ENCODE measurements at regions of chr22 and their contacts with region 1.

Region 1: GRCh38 chr22:19730655-19731360 is 7.5 kb downstream of the GP1BB start:
- DNase-seq: peak; percentile 72 to 84 (median 77)
- H3K4me3 ChIP-seq: no peak overlapping the region
- H3K4me3 Mint-ChIP-seq: peak overlapping the region; percentile 62 to 91 (median 84)
- H3K27ac ChIP-seq: no peak overlapping the region
- H3K27ac Mint-ChIP-seq: peak overlapping the region in 2 of 7 donors; percentile 68 to 80
- H3K4me1 ChIP-seq: peaks cover 11% of the 10 kb centered on the region
- H3K4me1 Mint-ChIP-seq: peaks cover 0 to 5% (median 3%) of the 10 kb centered on the region in 4 donors
- H3K27me3 ChIP-seq: no peaks in the 10 kb centered on the region
- H3K27me3 Mint-ChIP-seq: peaks cover 2 to 6% of the 10 kb centered on the region in 2 donors

Region 2: DNA sequence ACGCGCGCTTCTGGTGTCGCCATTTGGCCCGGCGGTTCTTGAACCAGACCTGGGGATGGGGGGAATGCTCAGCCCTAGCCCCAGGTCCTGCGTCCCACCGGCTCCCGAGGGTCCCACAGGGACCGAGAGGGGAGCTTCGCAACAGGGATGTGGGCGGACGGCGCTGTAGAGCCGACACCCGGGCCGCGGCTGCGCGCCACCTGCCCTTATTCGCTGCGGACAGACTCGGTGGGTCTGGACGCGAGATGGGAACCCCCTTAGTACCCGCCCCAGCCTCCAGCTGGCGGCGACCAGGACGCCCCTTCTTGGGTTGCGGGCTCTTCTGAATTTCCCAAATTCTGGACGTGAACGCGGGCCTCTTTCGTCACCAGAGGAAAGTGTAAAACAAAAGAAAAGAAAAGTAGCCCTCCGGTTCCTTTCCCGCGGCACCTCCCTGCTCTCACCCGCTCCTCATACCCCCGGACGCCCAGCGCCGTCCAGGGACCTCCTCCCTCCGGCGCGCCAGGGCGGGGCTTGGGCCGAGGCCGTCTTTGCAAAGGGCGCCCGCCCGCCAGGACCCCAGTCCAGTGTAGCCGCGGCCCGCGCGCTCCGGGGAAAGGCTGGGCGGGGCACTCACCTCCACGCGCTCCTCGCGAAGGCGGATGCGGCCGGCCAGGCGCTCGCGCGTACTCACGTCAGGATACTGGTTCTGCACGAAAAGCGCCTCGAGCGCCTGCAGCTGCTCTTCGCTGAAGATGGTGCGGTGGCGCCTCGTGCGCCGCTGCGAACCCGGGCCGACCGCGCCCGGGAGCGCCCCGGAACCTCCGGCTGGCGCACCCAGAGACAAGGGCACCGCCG is 581.5 kb before region 1 on chr22:
- CTCF ChIA-PET with region 1: no interaction called
- POLR2A ChIA-PET with region 1: no interaction called
- intact Hi-C with region 1: no loop called
- DNase-seq: peak in 4 of 5 donors; percentile 39 to 56 (median 46)
- H3K4me3 ChIP-seq: peak overlapping the region in 1 of 2 donors; percentile 14
- H3K4me3 Mint-ChIP-seq: peak overlapping the region; percentile 10 to 78 (median 60)
- H3K27ac ChIP-seq: no peak overlapping the region
- H3K27ac Mint-ChIP-seq: no peak overlapping the region
- H3K4me1 ChIP-seq: no peaks in the 10 kb centered on the region
- H3K4me1 Mint-ChIP-seq: peaks cover 9 to 25% (median 17%) of the 10 kb centered on the region in 4 donors
- H3K27me3 ChIP-seq: peaks cover 23% of the 10 kb centered on the region
- H3K27me3 Mint-ChIP-seq: peaks cover 26 to 31% of the 10 kb centered on the region in 2 donors

Region 3: DNA sequence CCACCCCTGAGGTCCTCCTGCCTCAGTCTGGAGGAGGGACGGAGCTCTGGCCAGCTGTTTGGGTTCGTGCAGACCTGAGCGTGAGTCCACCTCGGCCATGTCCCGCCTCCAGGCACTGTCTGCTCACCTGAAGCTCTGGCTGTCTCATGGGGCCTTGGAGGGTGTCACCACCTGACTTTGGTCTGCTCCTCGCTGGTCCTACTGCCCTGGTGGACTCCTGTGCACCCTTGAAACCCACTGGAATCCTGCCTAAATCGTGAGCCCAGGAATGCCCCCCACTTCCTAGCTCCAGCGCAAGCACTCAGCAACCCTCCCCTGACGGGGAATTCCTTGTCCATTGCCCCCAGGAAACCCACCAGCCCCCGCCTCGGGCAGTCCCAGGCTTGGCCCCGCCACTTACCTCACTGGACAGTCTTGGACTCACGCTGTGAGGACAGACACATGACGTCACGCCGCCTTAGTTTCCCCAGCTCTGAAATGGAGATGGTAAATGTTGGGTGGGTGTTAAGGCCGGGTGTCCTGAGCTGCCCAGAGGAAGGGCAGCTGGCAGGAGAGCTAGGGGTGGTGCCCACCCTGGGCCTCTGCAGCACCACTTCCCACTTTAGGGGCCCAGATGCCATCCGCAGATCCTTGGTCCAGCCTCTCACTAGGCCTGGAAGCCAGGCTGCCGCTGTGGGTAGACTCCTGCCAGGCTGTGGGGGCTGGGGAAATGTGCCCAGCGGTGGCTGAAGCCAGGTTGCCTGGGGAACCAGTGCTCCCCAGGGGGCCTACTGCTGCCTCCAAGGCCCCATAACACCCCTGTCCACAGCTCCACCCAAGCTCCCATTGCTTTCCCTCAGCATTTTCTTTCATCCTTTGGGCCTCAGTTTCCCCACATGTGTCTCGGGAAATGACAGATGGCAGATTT is 11.6 kb after region 1 on chr22:
- CTCF ChIA-PET with region 1: interaction called, 13 read pairs
- POLR2A ChIA-PET with region 1: no interaction called
- intact Hi-C with region 1: no loop called
- DNase-seq: no peak
- H3K4me3 ChIP-seq: no peak overlapping the region
- H3K4me3 Mint-ChIP-seq: no peak overlapping the region
- H3K27ac ChIP-seq: no peak overlapping the region
- H3K27ac Mint-ChIP-seq: no peak overlapping the region
- H3K4me1 ChIP-seq: no peaks in the 10 kb centered on the region
- H3K4me1 Mint-ChIP-seq: no peaks in the 10 kb centered on the region
- H3K27me3 ChIP-seq: no peaks in the 10 kb centered on the region
- H3K27me3 Mint-ChIP-seq: no peaks in the 10 kb centered on the region

Region 4: GRCh38 chr22:19756288-19757128 is 25.7 kb after region 1 on chr22:
- CTCF ChIA-PET with region 1: interaction called, 6 read pairs
- POLR2A ChIA-PET with region 1: no interaction called
- intact Hi-C with region 1: loop called (anchors 1 kb)
- DNase-seq: peak; percentile 61 to 70 (median 66)
- H3K4me3 ChIP-seq: peak overlapping the region in 1 of 2 donors; percentile 47
- H3K4me3 Mint-ChIP-seq: peak overlapping the region; percentile 55 to 83 (median 70)
- H3K27ac ChIP-seq: no peak overlapping the region
- H3K27ac Mint-ChIP-seq: no peak overlapping the region
- H3K4me1 ChIP-seq: peaks cover 33% of the 10 kb centered on the region
- H3K4me1 Mint-ChIP-seq: peaks cover 19 to 39% (median 27%) of the 10 kb centered on the region in 4 donors
- H3K27me3 ChIP-seq: peaks cover 22% of the 10 kb centered on the region
- H3K27me3 Mint-ChIP-seq: peaks cover 37 to 38% of the 10 kb centered on the region in 2 donors

Region 5: GRCh38 chr22:19772422-19773324 is 41.9 kb after region 1 on chr22:
- CTCF ChIA-PET with region 1: no interaction called
- POLR2A ChIA-PET with region 1: no interaction called
- intact Hi-C with region 1: no loop called
- DNase-seq: no peak
- H3K4me3 ChIP-seq: no peak overlapping the region
- H3K4me3 Mint-ChIP-seq: no peak overlapping the region
- H3K27ac ChIP-seq: no peak overlapping the region
- H3K27ac Mint-ChIP-seq: no peak overlapping the region
- H3K4me1 ChIP-seq: peaks cover 26% of the 10 kb centered on the region
- H3K4me1 Mint-ChIP-seq: peaks cover 2 to 8% (median 6%) of the 10 kb centered on the region in 4 donors
- H3K27me3 ChIP-seq: peaks cover 10% of the 10 kb centered on the region
- H3K27me3 Mint-ChIP-seq: peaks cover 47 to 52% of the 10 kb centered on the region in 2 donors

Region 6: DNA sequence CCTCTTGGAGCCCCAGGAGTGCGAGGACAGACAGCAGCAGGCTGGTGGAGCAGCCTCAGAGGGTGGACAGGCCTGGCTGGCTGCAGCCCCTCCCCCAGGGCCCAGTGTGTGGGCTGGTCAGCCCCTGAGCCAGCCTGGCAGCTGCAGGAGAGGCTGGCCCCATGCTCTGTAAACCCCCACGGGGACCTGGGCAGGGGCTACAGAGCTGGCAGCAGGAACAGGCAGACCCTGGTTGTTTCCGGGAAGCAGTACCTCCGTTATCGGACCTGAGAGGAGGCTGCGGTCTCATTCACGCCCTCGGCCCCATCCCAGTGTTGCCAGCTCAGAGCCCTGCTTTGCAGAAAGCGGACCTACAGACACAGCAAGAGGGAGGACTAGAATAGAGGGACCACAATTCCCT is 172.2 kb after region 1 on chr22:
- CTCF ChIA-PET with region 1: interaction called, 34 read pairs
- POLR2A ChIA-PET with region 1: no interaction called
- intact Hi-C with region 1: no loop called
- DNase-seq: no peak
- H3K4me3 ChIP-seq: no peak overlapping the region
- H3K4me3 Mint-ChIP-seq: no peak overlapping the region
- H3K27ac ChIP-seq: no peak overlapping the region
- H3K27ac Mint-ChIP-seq: no peak overlapping the region
- H3K4me1 ChIP-seq: no peaks in the 10 kb centered on the region
- H3K4me1 Mint-ChIP-seq: peaks cover 0 to 1% (median 0%) of the 10 kb centered on the region in 4 donors
- H3K27me3 ChIP-seq: no peaks in the 10 kb centered on the region
- H3K27me3 Mint-ChIP-seq: no peaks in the 10 kb centered on the region

Region 7: DNA sequence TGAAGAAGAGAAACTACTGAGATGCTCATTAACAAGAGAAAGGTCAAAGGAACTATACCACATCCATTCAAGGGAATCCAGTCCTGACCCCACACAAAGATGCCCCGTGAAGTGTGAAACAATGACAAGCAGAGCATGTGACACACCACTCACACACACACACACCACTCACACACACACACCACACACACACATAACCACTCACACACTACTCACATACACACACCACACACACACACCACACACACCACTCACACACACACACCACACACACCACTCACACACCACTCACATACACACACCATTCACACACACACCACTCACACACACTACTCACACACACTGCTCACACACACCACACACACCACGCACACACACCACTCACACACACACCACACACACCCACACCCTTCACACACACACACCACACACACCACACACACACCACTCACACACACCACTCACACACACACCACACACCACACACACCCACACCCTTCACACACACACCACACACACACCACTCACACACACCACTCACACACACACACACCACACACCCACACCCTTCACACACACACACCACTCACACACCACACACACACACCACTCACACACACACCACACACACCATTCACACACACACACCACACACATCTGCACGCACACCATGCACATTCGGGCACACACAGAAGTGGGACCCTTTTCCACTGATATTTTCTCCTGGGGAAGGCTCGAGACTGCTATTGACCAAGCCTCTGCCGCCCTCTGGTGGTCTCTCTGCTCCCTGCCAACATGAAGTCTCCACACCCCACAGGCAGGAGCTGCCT is 178.8 kb after region 1 on chr22:
- CTCF ChIA-PET with region 1: interaction called, 100 read pairs
- POLR2A ChIA-PET with region 1: interaction called, 8 read pairs
- intact Hi-C with region 1: loop called (anchors 1 kb)
- DNase-seq: peak; percentile 73 to 77 (median 76)
- H3K4me3 ChIP-seq: no peak overlapping the region
- H3K4me3 Mint-ChIP-seq: peak overlapping the region in 2 of 8 donors; percentile 13 to 53
- H3K27ac ChIP-seq: no peak overlapping the region
- H3K27ac Mint-ChIP-seq: peak overlapping the region in 6 of 7 donors; percentile 22 to 92 (median 71)
- H3K4me1 ChIP-seq: peaks cover 7% of the 10 kb centered on the region
- H3K4me1 Mint-ChIP-seq: peaks cover 2 to 6% (median 5%) of the 10 kb centered on the region in 4 donors
- H3K27me3 ChIP-seq: no peaks in the 10 kb centered on the region
- H3K27me3 Mint-ChIP-seq: no peaks in the 10 kb centered on the region

Region 8: GRCh38 chr22:19948057-19948760 is 217.4 kb after region 1 on chr22:
- CTCF ChIA-PET with region 1: interaction called, 18 read pairs
- POLR2A ChIA-PET with region 1: interaction called, 3 read pairs
- intact Hi-C with region 1: no loop called
- DNase-seq: no peak
- H3K4me3 ChIP-seq: no peak overlapping the region
- H3K4me3 Mint-ChIP-seq: no peak overlapping the region
- H3K27ac ChIP-seq: no peak overlapping the region
- H3K27ac Mint-ChIP-seq: no peak overlapping the region
- H3K4me1 ChIP-seq: peaks cover 16% of the 10 kb centered on the region
- H3K4me1 Mint-ChIP-seq: peaks cover 12 to 28% (median 20%) of the 10 kb centered on the region in 4 donors
- H3K27me3 ChIP-seq: no peaks in the 10 kb centered on the region
- H3K27me3 Mint-ChIP-seq: no peaks in the 10 kb centered on the region